Lower lobe of right lung (tissue), 2 donors: ENCODE measurements at regions of chr12 and their contacts with region 1.

Region 1: GRCh38 chr12:6062757-6063735 is 61.4 kb downstream of the VWF start:
- DNase-seq: peak; percentile 63
- ATAC-seq: peak; percentile 80 to 82
- H3K4me3 ChIP-seq: no peak overlapping the region
- H3K27ac ChIP-seq: peak overlapping the region; percentile 13
- H3K4me1 ChIP-seq: peaks cover 39% of the 10 kb centered on the region
- H3K27me3 ChIP-seq: no peaks in the 10 kb centered on the region
- CTCF ChIP-seq: peak; percentile 89

Region 2: DNA sequence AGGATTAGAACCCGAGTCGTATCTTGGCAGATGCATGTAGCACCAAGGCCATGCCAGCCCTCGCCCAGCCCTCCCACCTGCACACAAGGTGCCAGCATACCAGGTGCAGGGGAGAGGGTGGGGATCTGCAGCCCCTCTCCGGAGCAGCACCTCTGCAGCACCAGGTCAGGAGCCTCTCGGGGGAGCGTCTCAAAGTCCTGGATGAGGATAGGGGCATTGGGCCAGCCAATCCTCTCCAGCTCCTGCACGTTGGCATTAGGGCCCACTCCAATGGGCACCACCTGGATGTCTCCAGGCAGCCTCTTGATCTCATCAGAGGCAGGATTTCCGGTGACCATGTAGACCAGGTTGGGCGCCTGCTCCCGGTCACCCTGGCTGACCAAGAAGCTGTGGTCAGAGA is 44.8 kb before region 1 on chr12:
- intact Hi-C with region 1: no loop called
- DNase-seq: no peak
- ATAC-seq: no peak
- H3K4me3 ChIP-seq: no peak overlapping the region
- H3K27ac ChIP-seq: no peak overlapping the region
- H3K4me1 ChIP-seq: no peaks in the 10 kb centered on the region
- H3K27me3 ChIP-seq: no peaks in the 10 kb centered on the region
- CTCF ChIP-seq: no peak

Region 3: GRCh38 chr12:6285063-6285477 is 222.0 kb after region 1 on chr12:
- intact Hi-C with region 1: loop called (anchors 10 kb)
- DNase-seq: peak; percentile 62
- ATAC-seq: peak; percentile 79 to 90
- H3K4me3 ChIP-seq: no peak overlapping the region
- H3K27ac ChIP-seq: no peak overlapping the region
- H3K4me1 ChIP-seq: peaks cover 12% of the 10 kb centered on the region
- H3K27me3 ChIP-seq: no peaks in the 10 kb centered on the region
- CTCF ChIP-seq: peak; percentile 93